IMR-90 (cell line): ENCODE measurements at regions of chr6 and their contacts with region 1.

Region 1: GRCh38 chr6:130178692-130179091 is 44.1 kb downstream of the SAMD3 start:
- DNase-seq: peak; percentile 97
- ATAC-seq: peak; percentile 100
- H3K4me3 ChIP-seq: no peak overlapping the region
- H3K27ac ChIP-seq: no peak overlapping the region
- H3K4me1 ChIP-seq: peaks cover 2% of the 10 kb centered on the region; the same call in 1 of the 2 replicates
- H3K27me3 ChIP-seq: no peaks in the 10 kb centered on the region
- CTCF ChIP-seq: no peak
- POLR2A ChIP-seq: no peak
- RAD21 ChIP-seq: no peak

Region 2: DNA sequence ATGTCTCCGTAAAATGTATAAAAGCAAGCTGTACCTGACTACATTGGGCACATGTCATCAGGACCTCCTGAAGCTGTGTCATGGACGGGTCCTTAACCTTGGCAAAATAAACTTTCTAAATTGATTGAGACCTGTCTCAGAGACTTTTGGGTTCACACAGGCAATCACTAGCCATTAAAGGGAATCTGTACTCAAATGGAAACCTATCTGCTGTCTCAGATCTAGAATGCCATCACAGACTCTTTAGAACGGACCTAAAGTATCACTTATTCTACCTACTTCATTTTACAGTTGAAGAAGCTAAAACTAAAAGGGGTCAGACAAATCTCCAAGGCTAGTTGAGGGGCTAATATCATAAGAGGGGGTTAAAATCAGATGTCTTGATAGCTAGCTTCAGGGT is 33.0 kb after region 1 on chr6:
- CTCF ChIA-PET with region 1: no interaction called
- POLR2A ChIA-PET with region 1: no interaction called
- dilution Hi-C with region 1: no loop called
- in situ Hi-C with region 1: no loop called
- intact Hi-C with region 1: loop called (anchors 1 kb)
- DNase-seq: no peak
- ATAC-seq: no peak
- H3K4me3 ChIP-seq: no peak overlapping the region
- H3K27ac ChIP-seq: no peak overlapping the region
- H3K4me1 ChIP-seq: no peaks in the 10 kb centered on the region
- H3K27me3 ChIP-seq: no peaks in the 10 kb centered on the region; the same call in 1 of the 2 replicates
- CTCF ChIP-seq: no peak
- POLR2A ChIP-seq: no peak
- RAD21 ChIP-seq: no peak